B cell (primary cell): ENCODE measurements at regions of chr3 and their contacts with region 1.

Region 1: GRCh38 chr3:48989796-48990635 is at the start of gene P4HTM:
- DNase-seq: peak; percentile 74
- ATAC-seq: peak; percentile 66
- H3K4me3 ChIP-seq: peak within 1 kb of the TSS; percentile 65 to 86 (median 74)
- H3K4me3 Mint-ChIP-seq: peak within 1 kb of the TSS; percentile 96
- H3K27ac ChIP-seq: peak within 1 kb of the TSS; percentile 24 to 66
- H3K27ac Mint-ChIP-seq: peak within 1 kb of the TSS; percentile 95
- H3K4me1 ChIP-seq: peaks cover 18 to 21% of the 10 kb centered on the region in 2 donors
- H3K4me1 Mint-ChIP-seq: peaks cover 28% of the 10 kb centered on the region
- H3K27me3 ChIP-seq: no peaks in the 10 kb centered on the region
- H3K27me3 Mint-ChIP-seq: no peaks in the 10 kb centered on the region
- CTCF ChIP-seq: no peak
- total RNA-seq, gene P4HTM: 48.5 and 56.4 TPM in 2 replicates

Region 2: GRCh38 chr3:48970586-48970985 is 19.4 kb before region 1 on chr3:
- CTCF ChIA-PET with region 1: interaction called, 10 read pairs
- POLR2A ChIA-PET with region 1: no interaction called
- intact Hi-C with region 1: no loop called
- DNase-seq: no peak
- ATAC-seq: no peak
- H3K4me3 ChIP-seq: no peak overlapping the region
- H3K4me3 Mint-ChIP-seq: no peak overlapping the region
- H3K27ac ChIP-seq: no peak overlapping the region
- H3K27ac Mint-ChIP-seq: no peak overlapping the region
- H3K4me1 ChIP-seq: no peaks in the 10 kb centered on the region
- H3K4me1 Mint-ChIP-seq: no peaks in the 10 kb centered on the region
- H3K27me3 ChIP-seq: no peaks in the 10 kb centered on the region
- H3K27me3 Mint-ChIP-seq: no peaks in the 10 kb centered on the region
- CTCF ChIP-seq: no peak

Region 3: GRCh38 chr3:49007068-49007770 is 17.2 kb after region 1 on chr3 and contains the start of gene WDR6:
- CTCF ChIA-PET with region 1: interaction called, 73 read pairs
- POLR2A ChIA-PET with region 1: interaction called, 16 read pairs
- intact Hi-C with region 1: loop called (anchors 1 kb)
- DNase-seq: peak; percentile 98
- ATAC-seq: peak; percentile 86
- H3K4me3 ChIP-seq: peak within 1 kb of the TSS; percentile 69 to 99 (median 94)
- H3K4me3 Mint-ChIP-seq: peak within 1 kb of the TSS; percentile 100
- H3K27ac ChIP-seq: peak within 1 kb of the TSS; percentile 95 to 96
- H3K27ac Mint-ChIP-seq: peak within 1 kb of the TSS; percentile 99
- H3K4me1 ChIP-seq: peaks cover 15 to 18% of the 10 kb centered on the region in 2 donors
- H3K4me1 Mint-ChIP-seq: peaks cover 27% of the 10 kb centered on the region
- H3K27me3 ChIP-seq: no peaks in the 10 kb centered on the region
- H3K27me3 Mint-ChIP-seq: no peaks in the 10 kb centered on the region
- CTCF ChIP-seq: peak; percentile 52
- total RNA-seq, gene WDR6: 270 and 287 TPM in 2 replicates

Region 4: DNA sequence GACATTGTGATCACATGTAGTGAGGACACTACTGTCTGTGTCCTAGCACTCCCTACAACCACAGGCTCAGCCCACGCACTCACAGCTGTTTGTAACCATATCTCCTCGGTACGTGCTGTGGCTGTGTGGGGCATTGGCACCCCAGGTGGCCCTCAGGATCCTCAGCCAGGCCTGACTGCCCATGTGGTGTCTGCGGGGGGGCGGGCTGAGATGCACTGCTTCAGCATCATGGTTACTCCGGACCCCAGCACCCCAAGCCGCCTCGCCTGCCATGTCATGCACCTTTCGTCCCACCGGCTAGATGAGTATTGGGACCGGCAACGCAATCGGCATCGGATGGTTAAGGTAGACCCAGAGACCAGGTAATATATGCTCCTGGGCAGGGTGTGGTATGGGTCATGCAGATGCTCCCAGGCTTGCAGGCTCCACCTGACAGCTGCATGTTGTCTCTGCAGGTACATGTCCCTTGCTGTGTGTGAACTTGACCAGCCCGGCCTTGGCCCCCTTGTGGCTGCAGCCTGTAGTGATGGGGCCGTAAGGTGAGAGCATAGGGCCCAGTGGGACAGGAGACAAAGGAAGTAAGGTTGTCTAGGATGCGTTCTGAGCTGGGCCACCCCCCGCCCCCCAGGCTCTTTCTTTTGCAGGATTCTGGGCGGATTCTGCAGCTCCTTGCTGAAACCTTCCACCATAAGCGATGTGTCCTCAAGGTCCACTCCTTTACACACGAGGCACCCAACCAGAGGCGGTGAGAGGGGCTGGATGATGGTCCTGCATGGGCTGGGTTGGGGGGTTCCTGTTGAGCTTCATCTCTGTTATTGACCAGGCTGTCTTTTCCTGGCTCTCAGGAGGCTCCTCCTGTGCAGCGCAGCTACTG is 24.0 kb after region 1 on chr3:
- CTCF ChIA-PET with region 1: interaction called, 73 read pairs
- POLR2A ChIA-PET with region 1: interaction called, 3 read pairs
- intact Hi-C with region 1: no loop called
- DNase-seq: peak; percentile 64
- ATAC-seq: peak; percentile 48
- H3K4me3 ChIP-seq: no peak overlapping the region
- H3K4me3 Mint-ChIP-seq: no peak overlapping the region
- H3K27ac ChIP-seq: no peak overlapping the region
- H3K27ac Mint-ChIP-seq: no peak overlapping the region
- H3K4me1 ChIP-seq: peaks cover 10 to 14% of the 10 kb centered on the region in 2 donors
- H3K4me1 Mint-ChIP-seq: peaks cover 32% of the 10 kb centered on the region
- H3K27me3 ChIP-seq: no peaks in the 10 kb centered on the region
- H3K27me3 Mint-ChIP-seq: no peaks in the 10 kb centered on the region
- CTCF ChIP-seq: peak; percentile 56

Region 5: GRCh38 chr3:49021813-49022687 is 32.0 kb after region 1 on chr3 and contains the start of gene NDUFAF3:
- CTCF ChIA-PET with region 1: interaction called, 48 read pairs
- POLR2A ChIA-PET with region 1: interaction called, 8 read pairs
- intact Hi-C with region 1: no loop called
- DNase-seq: peak; percentile 96
- ATAC-seq: peak; percentile 66
- H3K4me3 ChIP-seq: peak within 1 kb of the TSS; percentile 66 to 92 (median 89)
- H3K4me3 Mint-ChIP-seq: peak within 1 kb of the TSS; percentile 96
- H3K27ac ChIP-seq: peak within 1 kb of the TSS; percentile 96 to 98
- H3K27ac Mint-ChIP-seq: peak within 1 kb of the TSS; percentile 97
- H3K4me1 ChIP-seq: peaks cover 36 to 60% of the 10 kb centered on the region in 2 donors
- H3K4me1 Mint-ChIP-seq: peaks cover 65% of the 10 kb centered on the region
- H3K27me3 ChIP-seq: no peaks in the 10 kb centered on the region
- H3K27me3 Mint-ChIP-seq: no peaks in the 10 kb centered on the region
- CTCF ChIP-seq: peak; percentile 95
- total RNA-seq, gene NDUFAF3: 67.0 and 67.5 TPM in 2 replicates

Region 6: GRCh38 chr3:49028673-49029562 is 38.9 kb after region 1 on chr3 and contains the start of gene IMPDH2:
- CTCF ChIA-PET with region 1: interaction called, 41 read pairs
- POLR2A ChIA-PET with region 1: interaction called, 4 read pairs
- intact Hi-C with region 1: loop called (anchors 1 kb)
- DNase-seq: peak; percentile 98
- ATAC-seq: peak; percentile 93
- H3K4me3 ChIP-seq: peak within 1 kb of the TSS; percentile 72 to 93 (median 73)
- H3K4me3 Mint-ChIP-seq: peak within 1 kb of the TSS; percentile 98
- H3K27ac ChIP-seq: peak within 1 kb of the TSS; percentile 86 to 92
- H3K27ac Mint-ChIP-seq: peak within 1 kb of the TSS; percentile 98
- H3K4me1 ChIP-seq: peaks cover 14 to 39% of the 10 kb centered on the region in 2 donors
- H3K4me1 Mint-ChIP-seq: peaks cover 45% of the 10 kb centered on the region
- H3K27me3 ChIP-seq: no peaks in the 10 kb centered on the region
- H3K27me3 Mint-ChIP-seq: no peaks in the 10 kb centered on the region
- CTCF ChIP-seq: no peak
- total RNA-seq, gene IMPDH2: 186 and 193 TPM in 2 replicates

Region 7: DNA sequence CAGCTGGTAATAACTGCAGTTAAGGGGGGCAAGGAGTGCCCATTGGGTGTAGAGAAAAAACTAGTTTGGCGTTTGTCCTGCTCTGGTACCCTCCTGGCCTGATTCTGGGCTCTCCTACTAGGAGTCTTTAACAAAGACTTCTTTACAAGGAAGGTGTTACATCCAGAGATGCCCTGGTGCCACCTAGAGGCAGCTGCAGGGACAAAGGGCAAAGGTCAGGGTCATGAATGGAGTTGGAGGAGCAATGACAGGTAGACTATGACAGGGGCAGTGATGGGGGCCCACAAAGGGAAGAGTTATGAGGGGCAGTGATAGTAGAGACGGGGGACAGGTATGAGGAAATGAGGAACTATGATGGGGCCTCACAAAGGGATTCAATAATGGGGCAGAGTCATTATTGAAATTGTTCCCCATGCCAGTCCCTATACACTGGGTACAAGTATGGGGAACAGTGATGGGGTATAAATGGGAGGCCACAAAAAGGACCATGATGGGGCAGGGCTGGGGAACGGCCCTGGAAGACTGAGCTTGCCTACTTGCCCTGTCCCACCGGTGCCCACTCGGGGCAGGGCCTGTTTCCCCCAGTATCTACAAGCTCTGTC is 168.2 kb after region 1 on chr3:
- CTCF ChIA-PET with region 1: interaction called, 69 read pairs
- POLR2A ChIA-PET with region 1: interaction called, 4 read pairs
- intact Hi-C with region 1: no loop called
- DNase-seq: peak; percentile 69
- ATAC-seq: peak; percentile 89
- H3K4me3 ChIP-seq: no peak overlapping the region
- H3K4me3 Mint-ChIP-seq: no peak overlapping the region
- H3K27ac ChIP-seq: peak overlapping the region in 1 of 2 donors; percentile 15
- H3K27ac Mint-ChIP-seq: no peak overlapping the region
- H3K4me1 ChIP-seq: no peaks in the 10 kb centered on the region
- H3K4me1 Mint-ChIP-seq: peaks cover 4% of the 10 kb centered on the region
- H3K27me3 ChIP-seq: no peaks in the 10 kb centered on the region
- H3K27me3 Mint-ChIP-seq: no peaks in the 10 kb centered on the region
- CTCF ChIP-seq: peak; percentile 52